IMR-90 (cell line): ENCODE measurements at regions of chr7 and their contacts with region 1.

Region 1: GRCh38 chr7:87152107-87152844 is at the start of gene DMTF1:
- DNase-seq: peak; percentile 93
- ATAC-seq: peak; percentile 88
- H3K4me3 ChIP-seq: peak within 1 kb of the TSS; percentile 81
- H3K27ac ChIP-seq: peak within 1 kb of the TSS; percentile 89
- H3K4me1 ChIP-seq: 0 out of 2 replicates have a peak, but pooled peaks cover 2% of the 10 kb centered on the region
- H3K27me3 ChIP-seq: no peaks in the 10 kb centered on the region
- CTCF ChIP-seq: 0 out of 2 replicates have a peak, but pooled peaks have one; percentile 6
- POLR2A ChIP-seq: peak; percentile 90
- RAD21 ChIP-seq: no peak
- total RNA-seq, gene DMTF1: 59.0 and 69.7 TPM in 2 replicates

Region 2: GRCh38 chr7:86932038-86932512 is 220.2 kb before region 1 on chr7:
- CTCF ChIA-PET with region 1: no interaction called
- POLR2A ChIA-PET with region 1: no interaction called
- dilution Hi-C with region 1: loop called (anchors 25 kb)
- in situ Hi-C with region 1: loop called (anchors 5 kb)
- intact Hi-C with region 1: no loop called
- DNase-seq: peak; percentile 60
- ATAC-seq: no peak
- H3K4me3 ChIP-seq: no peak overlapping the region
- H3K27ac ChIP-seq: no peak overlapping the region
- H3K4me1 ChIP-seq: no peaks in the 10 kb centered on the region
- H3K27me3 ChIP-seq: no peaks in the 10 kb centered on the region
- CTCF ChIP-seq: no peak
- POLR2A ChIP-seq: no peak
- RAD21 ChIP-seq: no peak

Region 3: GRCh38 chr7:87173471-87173870 is 21.2 kb after region 1 on chr7:
- CTCF ChIA-PET with region 1: interaction called, 3 read pairs
- POLR2A ChIA-PET with region 1: no interaction called
- dilution Hi-C with region 1: no loop called
- in situ Hi-C with region 1: no loop called
- intact Hi-C with region 1: loop called (anchors 2 kb)
- DNase-seq: no peak
- ATAC-seq: no peak
- H3K4me3 ChIP-seq: no peak overlapping the region
- H3K27ac ChIP-seq: no peak overlapping the region
- H3K4me1 ChIP-seq: no peaks in the 10 kb centered on the region
- H3K27me3 ChIP-seq: no peaks in the 10 kb centered on the region
- CTCF ChIP-seq: no peak
- POLR2A ChIP-seq: no peak
- RAD21 ChIP-seq: no peak

Region 4: GRCh38 chr7:87345166-87345927 is 193.1 kb after region 1 on chr7 and contains the start of gene CROT:
- CTCF ChIA-PET with region 1: no interaction called
- POLR2A ChIA-PET with region 1: no interaction called
- dilution Hi-C with region 1: no loop called
- in situ Hi-C with region 1: no loop called
- intact Hi-C with region 1: loop called (anchors 10 kb)
- DNase-seq: peak; percentile 91
- ATAC-seq: peak; percentile 99
- H3K4me3 ChIP-seq: peak within 1 kb of the TSS; percentile 68
- H3K27ac ChIP-seq: peak within 1 kb of the TSS; percentile 88
- H3K4me1 ChIP-seq: peaks cover 3% of the 10 kb centered on the region
- H3K27me3 ChIP-seq: no peaks in the 10 kb centered on the region
- CTCF ChIP-seq: no peak
- POLR2A ChIP-seq: no peak
- RAD21 ChIP-seq: no peak
- total RNA-seq, gene CROT: 7.5 and 14.4 TPM in 2 replicates

Region 5: DNA sequence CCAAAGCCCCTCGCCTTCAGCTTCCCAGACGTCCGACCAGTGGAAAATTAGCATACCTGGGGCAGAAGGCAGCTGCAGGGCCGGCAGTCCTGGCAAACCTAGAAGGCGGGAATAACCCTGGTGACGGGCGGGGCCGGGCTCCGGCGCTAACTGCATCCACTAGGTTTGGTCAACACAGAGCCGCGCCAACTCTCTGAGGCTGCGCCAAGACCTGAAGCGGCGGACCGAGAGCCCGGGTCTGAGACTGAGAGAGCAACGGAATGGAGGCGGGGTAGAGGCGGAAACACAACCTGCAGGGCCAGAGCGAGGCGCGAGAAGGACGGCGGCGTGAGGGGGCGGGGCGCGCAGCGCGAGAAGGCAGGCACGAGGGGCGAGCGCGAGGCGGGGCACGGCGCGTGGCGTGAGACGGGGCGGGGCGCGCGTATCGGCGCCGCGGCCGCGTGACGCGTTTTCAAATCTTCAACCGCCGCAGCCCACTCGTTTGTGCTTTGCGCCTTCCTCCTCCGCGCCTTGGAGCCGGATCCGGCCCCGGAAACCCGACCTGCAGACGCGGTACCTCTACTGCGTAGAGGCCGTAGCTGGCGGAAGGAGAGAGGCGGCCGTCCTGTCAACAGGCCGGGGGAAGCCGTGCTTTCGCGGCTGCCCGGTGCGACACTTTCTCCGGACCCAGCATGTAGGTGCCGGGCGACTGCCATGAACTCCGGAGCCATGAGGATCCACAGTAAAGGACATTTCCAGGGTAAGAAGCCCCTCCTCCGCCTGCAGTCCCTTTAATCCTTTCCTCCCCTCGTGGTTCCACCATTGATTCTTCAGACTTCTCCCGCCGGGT is 724.0 kb after region 1 on chr7 and contains the starts of genes DBF4 and SLC25A40:
- CTCF ChIA-PET with region 1: no interaction called
- POLR2A ChIA-PET with region 1: no interaction called
- dilution Hi-C with region 1: no loop called
- in situ Hi-C with region 1: no loop called
- intact Hi-C with region 1: loop called (anchors 10 kb)
- DNase-seq: peak; percentile 89
- ATAC-seq: peak; percentile 95
- H3K4me3 ChIP-seq: peak within 1 kb of the TSS; percentile 61
- H3K27ac ChIP-seq: peak within 1 kb of the TSS; percentile 39
- H3K4me1 ChIP-seq: no peaks in the 10 kb centered on the region
- H3K27me3 ChIP-seq: no peaks in the 10 kb centered on the region
- CTCF ChIP-seq: no peak
- POLR2A ChIP-seq: peak; percentile 86
- RAD21 ChIP-seq: no peak
- total RNA-seq, gene DBF4: 7.2 and 20.3 TPM in 2 replicates
- total RNA-seq, gene SLC25A40: 4.7 and 8.6 TPM in 2 replicates